ENCODE measurements at regions of chr11 and their contacts with region 1.

Region 1: DNA sequence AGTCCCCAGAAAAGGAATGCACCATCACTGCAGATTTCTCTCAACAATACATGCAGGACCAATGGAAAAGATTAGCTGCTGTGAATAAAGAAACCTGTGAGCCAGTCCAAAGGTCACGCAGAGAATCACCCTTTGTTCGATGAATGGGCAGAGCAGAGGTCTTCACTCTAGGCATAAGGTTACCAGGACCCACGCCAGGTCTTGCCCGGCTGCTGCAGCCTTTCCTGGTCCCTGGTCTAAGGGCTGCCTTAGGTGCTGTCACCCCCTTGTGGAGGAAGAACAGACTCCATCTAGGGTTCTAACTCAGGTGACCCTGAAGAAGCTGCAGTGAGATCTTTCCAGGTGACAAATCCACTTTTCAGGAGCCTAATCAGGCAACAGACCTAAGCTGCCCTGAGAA is 29.0 kb upstream of the NAP1L4 start:
- DNase-seq: peak; percentile 68
- ATAC-seq: peak; percentile 74
- H3K4me3 Mint-ChIP-seq: no peak overlapping the region
- H3K27ac Mint-ChIP-seq: no peak overlapping the region
- H3K4me1 Mint-ChIP-seq: peaks cover 67% of the 10 kb centered on the region
- H3K27me3 Mint-ChIP-seq: no peaks in the 10 kb centered on the region

Region 2: DNA sequence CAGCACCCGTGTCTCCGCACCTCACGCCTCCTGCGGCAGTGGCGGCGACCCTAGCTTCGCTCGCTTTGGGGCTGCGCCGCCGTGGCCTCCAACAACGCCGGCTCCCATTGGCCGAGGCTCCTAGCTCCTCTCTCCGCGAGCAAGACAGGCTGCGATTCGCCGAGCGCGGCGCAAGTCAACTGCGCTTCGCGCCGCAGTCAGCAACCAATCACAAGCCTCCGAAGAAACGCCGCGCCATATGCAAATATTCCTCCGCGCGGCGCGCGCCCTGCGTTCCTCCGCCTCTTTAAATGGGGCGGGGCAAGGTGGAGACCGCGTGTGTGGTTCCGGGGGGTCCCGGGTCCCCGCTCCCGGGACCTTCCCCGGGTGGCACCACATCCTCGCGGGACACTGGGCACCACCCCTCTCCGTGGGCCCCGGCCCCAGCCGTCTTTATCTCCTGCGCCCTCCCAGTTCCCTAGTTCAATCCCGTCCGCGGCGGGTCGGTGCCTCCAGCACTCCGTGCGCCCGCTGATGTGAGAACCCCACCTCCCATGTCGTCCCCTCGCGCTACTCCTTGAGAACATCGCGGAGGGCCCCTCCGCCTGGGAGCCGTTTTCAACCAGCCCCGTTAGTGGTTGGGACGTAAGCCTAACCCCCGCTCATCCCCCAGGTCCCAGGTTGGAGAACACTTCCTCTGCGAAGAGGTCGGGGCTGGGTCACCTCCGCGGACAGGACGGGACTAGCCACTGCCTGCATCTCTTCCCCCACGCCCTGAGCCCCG is 28.7 kb before region 1 on chr11 and contains the start of gene NAP1L4:
- CTCF ChIA-PET with region 1: interaction called, 23 read pairs
- DNase-seq: peak; percentile 98
- ATAC-seq: peak; percentile 90
- H3K4me3 Mint-ChIP-seq: peak within 1 kb of the TSS; percentile 95
- H3K27ac Mint-ChIP-seq: peak within 1 kb of the TSS; percentile 98
- H3K4me1 Mint-ChIP-seq: peaks cover 15% of the 10 kb centered on the region
- H3K27me3 Mint-ChIP-seq: no peaks in the 10 kb centered on the region
- total RNA-seq, gene NAP1L4: 347 to 389 TPM